ENCODE measurements at regions of chr13 and their contacts with region 1.

Region 1: GRCh38 chr13:31236211-31236786 is 36.5 kb downstream of the B3GLCT start:
- DNase-seq: no peak
- H3K4me3 ChIP-seq: no peak overlapping the region
- H3K27ac ChIP-seq: no peak overlapping the region
- H3K4me1 ChIP-seq: no peaks in the 10 kb centered on the region
- H3K27me3 ChIP-seq: no peaks in the 10 kb centered on the region
- CTCF ChIP-seq: peak; percentile 40 to 72 (median 42)
- POLR2A ChIP-seq: no peak

Region 2: DNA sequence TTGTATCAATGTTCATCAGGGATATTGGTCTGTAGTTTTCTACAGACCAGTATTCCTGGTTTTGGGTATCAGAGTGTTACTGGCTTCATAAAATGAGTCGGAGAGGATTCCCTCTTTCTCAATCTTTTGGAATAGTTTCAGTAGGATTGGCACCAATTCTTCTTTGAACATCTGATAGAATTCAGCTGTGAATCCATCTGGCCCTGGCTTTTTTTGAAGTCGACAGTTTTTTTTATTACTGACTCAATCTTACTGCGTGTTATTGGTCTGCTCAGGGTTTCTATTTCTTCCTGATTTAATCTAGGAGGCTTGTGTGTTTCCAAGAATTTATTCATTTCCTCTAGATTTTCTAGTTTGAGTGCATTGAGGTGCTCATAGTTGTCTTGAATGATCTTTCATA is 292.4 kb before region 1 on chr13:
- intact Hi-C with region 1: no loop called
- DNase-seq: no peak
- H3K4me3 ChIP-seq: no peak overlapping the region
- H3K27ac ChIP-seq: no peak overlapping the region
- H3K4me1 ChIP-seq: no peaks in the 10 kb centered on the region
- H3K27me3 ChIP-seq: no peaks in the 10 kb centered on the region
- CTCF ChIP-seq: no peak
- POLR2A ChIP-seq: no peak

Region 3: GRCh38 chr13:31409678-31410356 is 173.5 kb after region 1 on chr13:
- intact Hi-C with region 1: loop called (anchors 10 kb)
- DNase-seq: no peak
- H3K4me3 ChIP-seq: no peak overlapping the region
- H3K27ac ChIP-seq: no peak overlapping the region
- H3K4me1 ChIP-seq: no peaks in the 10 kb centered on the region
- H3K27me3 ChIP-seq: no peaks in the 10 kb centered on the region
- CTCF ChIP-seq: no peak
- POLR2A ChIP-seq: no peak